ENCODE measurements at regions of chr10 and their contacts with region 1.

Region 1: DNA sequence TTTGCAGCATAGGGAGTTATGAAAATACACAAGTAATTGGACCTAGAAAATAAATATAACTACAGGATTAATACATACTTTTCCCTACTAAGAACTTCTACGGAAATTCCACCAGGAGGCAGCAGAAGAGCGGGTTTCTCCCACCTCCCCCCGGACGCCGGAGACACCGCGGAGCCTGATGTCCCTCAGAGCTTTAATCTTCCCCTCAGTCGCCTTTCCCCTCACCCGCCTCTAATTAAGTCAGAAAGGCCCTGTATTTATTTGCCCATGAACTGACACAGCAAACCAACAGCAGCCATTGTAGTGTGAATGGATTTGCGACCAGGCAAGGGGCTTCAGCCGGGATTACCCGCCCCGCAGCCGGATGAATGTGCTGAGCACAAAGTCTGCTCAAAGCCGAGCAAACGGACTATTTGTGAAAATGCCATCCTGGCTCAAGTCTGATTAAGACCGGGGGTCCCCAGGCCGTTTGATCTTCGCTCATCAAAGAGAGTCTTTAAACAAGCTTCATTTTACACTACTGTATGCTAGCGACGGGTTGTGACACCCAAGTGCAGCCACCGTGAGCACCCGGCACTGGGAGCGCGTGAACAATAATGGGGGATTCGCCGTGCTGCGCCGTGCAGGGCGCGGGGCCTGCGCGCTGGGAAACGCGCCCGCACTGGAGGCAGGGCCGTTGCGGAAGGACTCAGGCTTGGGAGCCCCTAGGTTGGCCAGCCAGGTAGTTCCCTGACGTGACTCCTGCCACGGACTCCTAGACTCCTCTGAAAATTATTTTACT is 5.6 kb upstream of the DKK1 start:
- DNase-seq: peak; percentile 87 to 91
- H3K4me3 ChIP-seq: peak overlapping the region; percentile 88
- H3K4me3 Mint-ChIP-seq: peak overlapping the region; percentile 90
- H3K27ac Mint-ChIP-seq: peak overlapping the region; percentile 35
- H3K4me1 ChIP-seq: peaks cover 28% of the 10 kb centered on the region
- H3K4me1 Mint-ChIP-seq: peaks cover 31% of the 10 kb centered on the region
- H3K27me3 ChIP-seq: no peaks in the 10 kb centered on the region
- H3K27me3 Mint-ChIP-seq: no peaks in the 10 kb centered on the region
- CTCF ChIP-seq: peak; percentile 89 to 98

Region 2: GRCh38 chr10:52566471-52567246 is 258.2 kb after region 1 on chr10:
- CTCF ChIA-PET with region 1: interaction called, 48 read pairs
- POLR2A ChIA-PET with region 1: interaction called, 10 read pairs
- intact Hi-C with region 1: loop called (anchors 1 kb)
- DNase-seq: peak in 1 of 2 experiments; percentile 65
- H3K4me3 ChIP-seq: no peak overlapping the region
- H3K4me3 Mint-ChIP-seq: no peak overlapping the region
- H3K27ac Mint-ChIP-seq: no peak overlapping the region
- H3K4me1 ChIP-seq: peaks cover 5% of the 10 kb centered on the region
- H3K4me1 Mint-ChIP-seq: no peaks in the 10 kb centered on the region
- H3K27me3 ChIP-seq: no peaks in the 10 kb centered on the region; the same call in 1 of the 2 replicates
- H3K27me3 Mint-ChIP-seq: no peaks in the 10 kb centered on the region
- CTCF ChIP-seq: peak; percentile 78 to 83

Region 3: DNA sequence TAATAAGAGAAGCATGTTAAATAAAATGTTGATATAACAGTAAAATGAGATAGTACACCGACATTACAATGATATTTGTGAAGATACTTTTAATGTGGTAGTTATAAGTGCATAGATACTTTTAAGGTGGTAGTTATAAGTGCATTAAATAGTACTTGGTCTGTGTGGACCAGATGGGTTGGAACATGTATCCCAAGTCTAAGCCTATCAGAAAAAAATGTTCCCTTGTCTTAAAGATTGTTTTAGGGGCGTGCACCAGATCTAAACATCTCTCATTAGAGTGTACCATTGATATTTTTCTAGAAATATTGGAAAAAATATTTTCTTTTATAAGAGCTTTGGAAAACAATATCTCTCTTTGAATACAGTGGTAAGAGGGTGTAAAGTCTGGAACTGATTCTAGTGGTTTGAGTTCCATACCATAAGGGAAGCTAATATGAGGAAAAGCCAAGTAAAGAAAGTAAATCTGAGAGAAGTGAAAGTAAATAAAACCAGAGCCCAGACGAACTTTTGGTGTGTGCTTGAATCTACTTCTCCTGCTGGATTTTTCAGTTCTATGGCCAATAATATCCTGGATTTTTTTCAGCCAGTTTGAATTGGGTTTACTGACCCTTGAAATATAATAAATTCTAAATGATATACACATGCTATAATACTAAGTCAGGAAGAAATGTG is 288.9 kb after region 1 on chr10:
- CTCF ChIA-PET with region 1: interaction called, 3 read pairs
- POLR2A ChIA-PET with region 1: no interaction called
- intact Hi-C with region 1: loop called (anchors 1 kb)
- DNase-seq: no peak
- H3K4me3 ChIP-seq: no peak overlapping the region
- H3K4me3 Mint-ChIP-seq: no peak overlapping the region
- H3K27ac Mint-ChIP-seq: no peak overlapping the region
- H3K4me1 ChIP-seq: peaks cover 5% of the 10 kb centered on the region; the same call in 1 of the 2 replicates
- H3K4me1 Mint-ChIP-seq: peaks cover 8% of the 10 kb centered on the region
- H3K27me3 ChIP-seq: no peaks in the 10 kb centered on the region
- H3K27me3 Mint-ChIP-seq: no peaks in the 10 kb centered on the region
- CTCF ChIP-seq: no peak

Region 4: DNA sequence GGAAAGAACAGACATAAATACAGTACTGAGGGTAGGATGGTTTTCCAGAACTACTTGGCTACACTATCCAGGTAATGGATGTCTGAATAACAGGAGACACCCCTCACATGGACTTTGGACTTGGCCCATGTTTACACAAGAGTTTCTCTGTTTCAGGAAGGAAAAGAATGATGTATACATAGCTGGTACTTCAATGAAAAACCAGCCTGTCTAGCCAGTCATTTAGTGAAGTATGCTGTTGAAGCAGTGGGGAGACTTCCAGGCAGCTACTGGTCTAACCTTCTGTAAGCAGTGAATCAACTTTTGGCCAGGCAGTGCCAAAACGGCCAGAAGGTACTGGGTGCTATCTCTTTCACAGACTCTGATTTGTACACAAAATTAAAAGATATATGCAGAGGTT is 329.2 kb after region 1 on chr10:
- CTCF ChIA-PET with region 1: interaction called, 9 read pairs
- POLR2A ChIA-PET with region 1: no interaction called
- intact Hi-C with region 1: loop called (anchors 1 kb)
- DNase-seq: peak; percentile 86 to 89
- H3K4me3 ChIP-seq: no peak overlapping the region
- H3K4me3 Mint-ChIP-seq: peak overlapping the region; percentile 14
- H3K27ac Mint-ChIP-seq: peak overlapping the region; percentile 57
- H3K4me1 ChIP-seq: peaks cover 34% of the 10 kb centered on the region
- H3K4me1 Mint-ChIP-seq: peaks cover 40% of the 10 kb centered on the region
- H3K27me3 ChIP-seq: no peaks in the 10 kb centered on the region
- H3K27me3 Mint-ChIP-seq: no peaks in the 10 kb centered on the region
- CTCF ChIP-seq: no peak

Region 5: DNA sequence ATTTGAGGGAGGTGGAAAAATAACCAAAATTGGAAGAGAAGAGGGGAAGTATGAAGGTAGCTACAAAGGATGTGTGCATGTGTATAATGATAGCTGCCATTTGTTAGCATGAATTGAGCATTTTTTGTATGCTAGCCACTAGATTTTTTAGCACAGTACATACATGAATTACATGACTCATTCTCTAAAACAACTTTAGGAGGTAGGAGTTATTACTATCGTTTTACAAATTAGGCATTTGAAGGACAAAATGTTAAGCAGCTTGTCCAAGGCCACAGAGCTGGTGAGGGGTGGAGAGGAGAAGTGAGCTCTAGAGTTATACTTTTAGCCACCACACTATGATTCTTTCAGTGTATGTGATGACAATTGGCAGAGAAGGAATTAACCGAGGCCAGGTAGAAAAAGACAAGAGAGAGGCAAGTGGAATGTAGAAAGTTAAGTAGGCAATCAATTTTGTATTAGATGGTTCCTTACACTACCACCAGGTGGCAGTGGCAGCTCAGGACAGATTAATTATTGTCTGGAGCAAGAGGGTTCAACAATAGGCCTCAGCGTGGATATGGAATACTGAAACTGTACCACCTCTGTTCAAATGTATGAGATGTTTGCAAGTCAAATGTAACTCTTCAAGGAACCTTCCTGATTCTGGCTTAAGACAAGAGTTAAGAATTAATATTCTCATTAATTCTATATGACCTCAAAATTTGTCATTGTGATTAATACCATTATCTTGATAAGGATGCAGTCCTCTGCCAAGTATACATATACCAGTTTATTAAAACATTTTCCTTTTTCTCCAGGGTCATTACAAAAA is 336.1 kb after region 1 on chr10:
- CTCF ChIA-PET with region 1: interaction called, 4 read pairs
- POLR2A ChIA-PET with region 1: no interaction called
- intact Hi-C with region 1: loop called (anchors 1 kb)
- DNase-seq: peak; percentile 63 to 84
- H3K4me3 ChIP-seq: no peak overlapping the region
- H3K4me3 Mint-ChIP-seq: no peak overlapping the region
- H3K27ac Mint-ChIP-seq: no peak overlapping the region
- H3K4me1 ChIP-seq: peaks cover 25% of the 10 kb centered on the region
- H3K4me1 Mint-ChIP-seq: peaks cover 51% of the 10 kb centered on the region
- H3K27me3 ChIP-seq: no peaks in the 10 kb centered on the region
- H3K27me3 Mint-ChIP-seq: no peaks in the 10 kb centered on the region
- CTCF ChIP-seq: peak; percentile 89 to 98

Region 6: DNA sequence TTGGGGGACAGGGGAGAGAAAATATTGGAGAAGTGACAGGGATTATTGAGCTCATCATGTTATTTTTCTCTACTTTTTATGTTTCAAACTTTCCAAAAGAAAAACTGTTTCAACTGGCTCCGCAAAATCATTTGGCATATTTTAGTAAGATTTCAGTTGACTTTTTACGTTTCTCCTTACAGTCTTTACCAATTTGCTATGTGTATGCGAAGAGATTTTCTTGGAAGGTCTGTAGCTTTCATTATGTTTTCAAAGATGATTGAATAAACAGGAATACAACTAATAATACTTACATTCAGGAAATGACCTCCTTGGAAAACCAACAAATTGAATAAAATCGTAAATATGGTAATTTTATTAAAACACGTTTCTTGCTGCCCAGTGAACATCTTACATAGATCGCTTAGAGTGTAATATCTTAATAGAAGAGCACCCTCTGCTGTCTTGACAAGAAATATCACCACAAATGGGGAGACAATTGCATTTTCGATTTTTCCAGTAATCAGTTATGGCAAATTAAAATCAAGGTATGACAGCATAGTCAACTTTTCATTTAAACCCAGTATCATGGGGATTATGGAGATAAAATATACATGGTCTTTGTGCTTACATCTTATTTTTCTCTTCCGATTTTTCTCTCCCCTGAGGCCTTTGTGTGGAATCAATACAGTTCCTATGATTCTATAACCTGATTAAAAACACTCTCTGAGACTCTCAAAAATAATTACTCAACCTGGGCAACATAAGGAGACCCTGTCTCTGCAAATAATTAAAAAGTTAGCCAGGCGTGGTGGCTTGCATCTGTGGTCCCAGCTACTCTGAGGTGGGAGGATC is 421.0 kb after region 1 on chr10:
- CTCF ChIA-PET with region 1: interaction called, 3 read pairs
- POLR2A ChIA-PET with region 1: interaction called, 8 read pairs
- intact Hi-C with region 1: loop called (anchors 1 kb)
- DNase-seq: peak in 1 of 2 experiments; percentile 49
- H3K4me3 ChIP-seq: no peak overlapping the region
- H3K4me3 Mint-ChIP-seq: no peak overlapping the region
- H3K27ac Mint-ChIP-seq: no peak overlapping the region
- H3K4me1 ChIP-seq: peaks cover 8% of the 10 kb centered on the region; the same call in 1 of the 2 replicates
- H3K4me1 Mint-ChIP-seq: no peaks in the 10 kb centered on the region
- H3K27me3 ChIP-seq: no peaks in the 10 kb centered on the region
- H3K27me3 Mint-ChIP-seq: peaks cover 3% of the 10 kb centered on the region
- CTCF ChIP-seq: peak; percentile 73 to 89

Region 7: DNA sequence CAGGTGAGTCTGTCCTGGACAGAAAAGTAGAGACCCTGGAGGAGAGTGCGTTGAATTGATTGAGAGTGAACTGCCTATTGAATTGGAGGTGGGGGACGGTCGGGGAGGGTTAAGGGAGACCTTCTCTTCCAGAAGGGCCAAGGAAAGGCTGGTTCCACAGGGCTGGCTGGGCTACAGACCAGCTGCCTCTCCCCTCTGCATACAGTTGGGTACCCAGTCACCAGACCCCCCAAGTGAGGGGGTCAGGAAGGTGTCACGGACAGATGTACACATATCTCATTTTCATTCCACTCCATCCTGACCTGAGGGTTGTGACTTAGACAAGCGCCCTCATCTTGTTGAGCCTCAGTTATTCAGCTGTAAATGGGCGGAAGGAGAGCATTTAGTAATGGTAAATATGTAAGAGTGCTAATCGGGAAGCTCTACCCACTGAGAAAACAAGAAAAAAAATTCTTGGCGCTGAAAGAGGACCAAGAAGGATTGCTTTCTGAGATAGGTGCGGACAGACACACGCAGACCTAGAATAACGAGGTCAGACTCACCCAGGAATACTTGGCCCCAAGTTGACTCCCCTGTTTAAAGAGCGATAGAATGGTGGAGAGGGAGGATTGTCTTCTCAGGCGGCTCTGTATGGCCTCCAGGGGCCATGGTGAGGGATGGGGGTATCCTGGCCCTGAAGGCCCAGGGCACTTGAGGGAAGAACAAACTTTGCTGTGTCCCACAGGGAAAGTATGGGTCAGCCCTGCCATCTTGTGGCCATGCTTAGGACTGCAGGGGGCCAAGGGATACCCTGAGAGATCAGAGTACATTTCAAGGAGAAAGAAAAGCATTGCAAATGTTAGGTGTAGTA is 471.3 kb after region 1 on chr10:
- CTCF ChIA-PET with region 1: interaction called, 3 read pairs
- POLR2A ChIA-PET with region 1: no interaction called
- intact Hi-C with region 1: loop called (anchors 1 kb)
- DNase-seq: peak; percentile 89 to 96
- H3K4me3 ChIP-seq: no peak overlapping the region
- H3K4me3 Mint-ChIP-seq: no peak overlapping the region
- H3K27ac Mint-ChIP-seq: peak overlapping the region; percentile 5
- H3K4me1 ChIP-seq: peaks cover 12% of the 10 kb centered on the region
- H3K4me1 Mint-ChIP-seq: peaks cover 27% of the 10 kb centered on the region
- H3K27me3 ChIP-seq: no peaks in the 10 kb centered on the region
- H3K27me3 Mint-ChIP-seq: no peaks in the 10 kb centered on the region
- CTCF ChIP-seq: peak; percentile 100

Measured in Caco-2 (cell line).